ENCODE measurements at regions of chr10 and their contacts with region 1.

Region 1: DNA sequence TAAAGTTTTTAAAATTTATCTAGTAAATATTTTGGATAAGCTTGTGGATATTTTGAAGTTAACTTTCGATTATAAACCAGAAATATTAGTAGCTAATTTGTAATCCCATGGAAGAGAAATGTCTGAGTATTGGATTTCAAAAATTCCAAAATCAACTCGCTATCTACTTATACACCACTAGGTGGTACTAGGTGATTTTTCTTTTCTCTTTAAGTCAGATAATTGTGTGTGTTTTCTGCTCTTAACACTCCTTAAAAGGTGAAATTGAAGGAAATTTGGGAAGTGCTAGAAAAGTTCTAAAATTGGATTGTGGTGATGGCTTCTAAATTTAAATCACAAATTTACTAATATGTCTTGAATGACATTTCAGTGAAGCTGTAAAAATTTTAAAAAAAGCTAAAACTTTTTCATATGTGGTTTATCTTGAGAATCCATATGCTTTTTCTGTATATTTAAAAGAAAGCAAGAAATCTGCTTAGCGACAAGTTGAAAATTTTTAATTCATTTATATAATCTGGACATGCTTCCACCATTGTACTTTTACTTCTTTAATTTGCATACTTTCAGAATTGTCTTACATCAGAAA is 90.2 kb downstream of the IPMK start:
- DNase-seq: peak; percentile 15 to 42 (median 36)
- H3K4me3 ChIP-seq: no peak overlapping the region
- H3K27ac ChIP-seq: no peak overlapping the region
- H3K4me1 ChIP-seq: no peaks in the 10 kb centered on the region
- H3K27me3 ChIP-seq: peaks cover 0 to 2% (median 0%) of the 10 kb centered on the region in 5 experiments

Region 2: DNA sequence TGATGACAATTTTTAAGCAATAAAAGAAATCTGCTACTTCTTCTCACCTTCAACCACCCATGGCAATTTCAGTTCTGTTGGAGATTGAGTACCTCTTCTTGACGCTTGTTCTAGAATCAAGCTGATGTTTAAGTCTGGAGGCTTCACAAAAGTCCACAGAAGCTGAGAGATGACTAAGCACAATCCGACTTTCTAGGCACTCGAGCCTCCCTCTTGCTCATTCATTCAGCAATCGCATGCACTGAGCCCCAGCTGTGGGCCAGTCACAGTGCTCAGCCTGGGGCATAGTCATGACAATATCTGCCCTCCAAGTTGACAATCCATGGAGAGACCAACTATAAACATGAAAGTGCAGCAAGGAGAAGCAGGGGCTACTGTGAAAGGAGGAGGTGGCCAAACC is 12.9 kb before region 1 on chr10:
- CTCF ChIA-PET with region 1: interaction called, 10 read pairs
- POLR2A ChIA-PET with region 1: no interaction called
- DNase-seq: no peak
- H3K4me3 ChIP-seq: no peak overlapping the region
- H3K27ac ChIP-seq: no peak overlapping the region
- H3K4me1 ChIP-seq: no peaks in the 10 kb centered on the region
- H3K27me3 ChIP-seq: peaks cover 0 to 2% (median 0%) of the 10 kb centered on the region in 5 experiments

Region 3: GRCh38 chr10:58189269-58189668 is 11.8 kb after region 1 on chr10:
- CTCF ChIA-PET with region 1: interaction called, 10 read pairs
- POLR2A ChIA-PET with region 1: no interaction called
- DNase-seq: no peak
- H3K4me3 ChIP-seq: no peak overlapping the region
- H3K27ac ChIP-seq: no peak overlapping the region
- H3K4me1 ChIP-seq: no peaks in the 10 kb centered on the region
- H3K27me3 ChIP-seq: peaks cover 0 to 3% (median 0%) of the 10 kb centered on the region in 5 experiments

Region 4: GRCh38 chr10:58291538-58292174 is 114.2 kb after region 1 on chr10:
- CTCF ChIA-PET with region 1: interaction called, 143 read pairs
- POLR2A ChIA-PET with region 1: no interaction called
- DNase-seq: peak; percentile 57 to 74 (median 68)
- H3K4me3 ChIP-seq: no peak overlapping the region
- H3K27ac ChIP-seq: no peak overlapping the region
- H3K4me1 ChIP-seq: no peaks in the 10 kb centered on the region
- H3K27me3 ChIP-seq: no peaks in the 10 kb centered on the region

Measured in common myeloid progenitor, CD34-positive (primary cell).